ENCODE measurements at regions of chr4 and their contacts with region 1.

Region 1: DNA sequence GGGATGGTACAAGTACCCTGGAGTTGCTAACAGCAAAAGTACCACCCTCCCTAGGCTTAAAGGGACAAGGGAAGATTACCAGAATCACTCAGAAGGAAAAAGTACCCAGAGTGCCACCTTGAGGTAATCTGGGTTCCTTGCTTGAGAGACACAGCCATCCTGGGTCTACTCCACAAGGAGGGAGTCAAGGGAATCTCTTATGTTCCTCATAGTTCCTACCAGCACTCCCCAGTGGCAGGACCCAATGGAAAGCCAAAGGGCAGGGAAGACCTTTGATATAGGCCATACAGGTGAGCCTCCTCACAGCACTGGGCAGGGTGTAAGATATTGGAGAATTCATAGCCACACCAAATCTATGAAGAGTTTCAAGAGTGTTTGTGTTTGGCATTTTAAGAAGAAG is 5.7 kb downstream of the IL2 start:
- DNase-seq: peak in 2 of 4 experiments; percentile 12 to 34
- ATAC-seq: peak; percentile 88
- H3K4me3 ChIP-seq: no peak overlapping the region
- H3K27ac ChIP-seq: no peak overlapping the region
- H3K4me1 ChIP-seq: no peaks in the 10 kb centered on the region
- H3K27me3 ChIP-seq: no peaks in the 10 kb centered on the region
- CTCF ChIP-seq: peak; percentile 42 to 69 (median 61); a peak in 4 of 6 replicates
- EP300 ChIP-seq: no peak
- POLR2A ChIP-seq: no peak
- RAD21 ChIP-seq: peak in 1 of 2 experiments; percentile 48; a peak in 2 of 4 replicates

Region 2: GRCh38 chr4:122309988-122310626 is 140.7 kb before region 1 on chr4:
- CTCF ChIA-PET with region 1: no interaction called
- POLR2A ChIA-PET with region 1: no interaction called
- in situ Hi-C with region 1: no loop called
- intact Hi-C with region 1: loop called (anchors 2 kb)
- DNase-seq: peak; percentile 3 to 12 (median 12)
- ATAC-seq: no peak
- H3K4me3 ChIP-seq: no peak overlapping the region
- H3K27ac ChIP-seq: no peak overlapping the region
- H3K4me1 ChIP-seq: no peaks in the 10 kb centered on the region; a peak in 1 of 5 replicates
- H3K27me3 ChIP-seq: no peaks in the 10 kb centered on the region
- CTCF ChIP-seq: peak in 2 of 3 experiments; percentile 33 to 72; a peak in 3 of 6 replicates
- EP300 ChIP-seq: no peak
- POLR2A ChIP-seq: no peak
- RAD21 ChIP-seq: peak; percentile 51 to 60

Region 3: GRCh38 chr4:122346503-122346902 is 104.3 kb before region 1 on chr4:
- CTCF ChIA-PET with region 1: no interaction called
- POLR2A ChIA-PET with region 1: no interaction called
- in situ Hi-C with region 1: no loop called
- intact Hi-C with region 1: no loop called
- DNase-seq: no peak
- ATAC-seq: no peak
- H3K4me3 ChIP-seq: no peak overlapping the region
- H3K27ac ChIP-seq: no peak overlapping the region
- H3K4me1 ChIP-seq: no peaks in the 10 kb centered on the region
- H3K27me3 ChIP-seq: no peaks in the 10 kb centered on the region
- CTCF ChIP-seq: no peak
- EP300 ChIP-seq: no peak
- POLR2A ChIP-seq: no peak
- RAD21 ChIP-seq: no peak

Measured in K562 (cell line).